T-cell (primary cell): ENCODE measurements at regions of chr12 and their contacts with region 1.

Region 1: DNA sequence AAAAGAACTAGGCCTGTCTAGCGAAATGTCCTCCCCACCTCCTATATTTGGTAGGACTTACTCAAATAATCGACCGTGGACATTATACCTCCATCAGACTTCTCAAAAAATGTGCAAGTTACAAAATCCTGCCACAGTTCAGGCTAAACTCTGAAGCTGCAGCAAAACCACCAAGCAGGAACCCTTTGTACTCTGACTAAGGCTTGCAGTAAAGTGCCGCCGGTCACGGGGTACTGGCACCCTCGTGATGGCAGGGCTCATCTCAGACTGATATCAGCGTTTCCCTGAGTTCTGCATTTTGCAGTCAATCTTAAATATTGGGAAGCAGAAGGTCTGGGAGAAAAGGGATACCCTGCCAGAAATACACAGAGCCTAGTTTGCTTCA is 17.1 kb downstream of the SLC11A2 start:
- DNase-seq: peak in 34 of 35 experiments; percentile 31 to 74 (median 54)
- ATAC-seq: peak; percentile 99 to 100 (median 100)
- H3K4me3 ChIP-seq: peak overlapping the region in 1 of 2 donors; percentile 29
- H3K4me3 Mint-ChIP-seq: peak overlapping the region; percentile 44 to 76 (median 55)
- H3K27ac ChIP-seq: peak overlapping the region; percentile 27
- H3K27ac Mint-ChIP-seq: peak overlapping the region; percentile 79 to 88
- H3K4me1 ChIP-seq: peaks cover 11 to 12% of the 10 kb centered on the region in 2 experiments
- H3K4me1 Mint-ChIP-seq: peaks cover 33 to 39% (median 39%) of the 10 kb centered on the region in 3 donors
- H3K27me3 ChIP-seq: no peaks in the 10 kb centered on the region
- H3K27me3 Mint-ChIP-seq: no peaks in the 10 kb centered on the region

Region 2: GRCh38 chr12:50992819-50993218 is 16.2 kb before region 1 on chr12:
- CTCF ChIA-PET with region 1: no interaction called
- POLR2A ChIA-PET with region 1: no interaction called
- DNase-seq: no peak
- ATAC-seq: no peak
- H3K4me3 ChIP-seq: no peak overlapping the region
- H3K4me3 Mint-ChIP-seq: no peak overlapping the region
- H3K27ac ChIP-seq: no peak overlapping the region
- H3K27ac Mint-ChIP-seq: no peak overlapping the region
- H3K4me1 ChIP-seq: no peaks in the 10 kb centered on the region
- H3K4me1 Mint-ChIP-seq: no peaks in the 10 kb centered on the region
- H3K27me3 ChIP-seq: no peaks in the 10 kb centered on the region
- H3K27me3 Mint-ChIP-seq: no peaks in the 10 kb centered on the region

Region 3: DNA sequence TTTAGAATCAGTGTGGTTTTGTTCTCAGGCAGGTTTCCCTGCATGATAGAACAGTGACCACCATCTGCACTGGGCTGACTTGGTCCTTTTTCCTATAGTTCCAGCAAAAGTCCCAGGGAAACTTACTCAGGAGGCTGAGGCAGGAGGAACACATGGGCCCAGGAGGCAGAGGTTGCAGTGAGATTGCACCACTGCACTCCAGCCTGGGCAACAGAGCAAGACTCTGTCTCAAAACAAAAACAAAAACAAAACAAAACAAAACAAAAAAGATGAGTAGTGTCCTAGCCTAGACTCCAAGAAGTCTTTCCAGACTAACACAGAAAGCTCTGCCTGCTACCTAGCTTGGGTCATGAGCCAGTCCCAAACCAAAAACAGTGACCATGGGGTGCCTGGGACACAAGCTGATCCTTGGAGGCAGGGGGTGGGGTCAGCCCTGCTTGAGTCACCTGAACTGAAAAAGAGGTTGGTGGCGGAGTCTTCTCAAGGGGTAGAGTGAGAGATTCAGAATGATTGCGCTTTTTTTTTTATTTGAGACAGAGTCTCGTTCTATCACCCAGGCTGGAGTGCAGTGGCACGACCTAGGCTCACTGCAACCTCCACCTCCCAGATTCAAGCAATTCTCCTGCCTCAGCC is 24.5 kb after region 1 on chr12:
- CTCF ChIA-PET with region 1: interaction called, 5 to 12 read pairs
- POLR2A ChIA-PET with region 1: interaction called in 1 of 2 experiments, 3 read pairs
- DNase-seq: no peak
- ATAC-seq: no peak
- H3K4me3 ChIP-seq: no peak overlapping the region
- H3K4me3 Mint-ChIP-seq: no peak overlapping the region
- H3K27ac ChIP-seq: no peak overlapping the region
- H3K27ac Mint-ChIP-seq: no peak overlapping the region
- H3K4me1 ChIP-seq: no peaks in the 10 kb centered on the region
- H3K4me1 Mint-ChIP-seq: peaks cover 0 to 1% (median 0%) of the 10 kb centered on the region in 3 donors
- H3K27me3 ChIP-seq: peaks cover 0 to 6% of the 10 kb centered on the region in 2 experiments
- H3K27me3 Mint-ChIP-seq: no peaks in the 10 kb centered on the region